ENCODE measurements at regions of chr15 and their contacts with region 1.

Region 1: GRCh38 chr15:31391687-31392671 is 65.3 kb downstream of the KLF13 start:
- DNase-seq: no peak
- ATAC-seq: peak; percentile 75
- H3K4me3 ChIP-seq: peak overlapping the region; percentile 45 to 77 (median 63)
- H3K27ac ChIP-seq: no peak overlapping the region
- H3K4me1 ChIP-seq: peaks cover 32% of the 10 kb centered on the region
- H3K27me3 ChIP-seq: peaks cover 2 to 18% of the 10 kb centered on the region in 2 experiments; a peak in 2 of 5 replicates
- CTCF ChIP-seq: peak; percentile 18; the same call in 1 of the 2 replicates
- EP300 ChIP-seq: no peak
- POLR2A ChIP-seq: no peak
- RAD21 ChIP-seq: no peak

Region 2: DNA sequence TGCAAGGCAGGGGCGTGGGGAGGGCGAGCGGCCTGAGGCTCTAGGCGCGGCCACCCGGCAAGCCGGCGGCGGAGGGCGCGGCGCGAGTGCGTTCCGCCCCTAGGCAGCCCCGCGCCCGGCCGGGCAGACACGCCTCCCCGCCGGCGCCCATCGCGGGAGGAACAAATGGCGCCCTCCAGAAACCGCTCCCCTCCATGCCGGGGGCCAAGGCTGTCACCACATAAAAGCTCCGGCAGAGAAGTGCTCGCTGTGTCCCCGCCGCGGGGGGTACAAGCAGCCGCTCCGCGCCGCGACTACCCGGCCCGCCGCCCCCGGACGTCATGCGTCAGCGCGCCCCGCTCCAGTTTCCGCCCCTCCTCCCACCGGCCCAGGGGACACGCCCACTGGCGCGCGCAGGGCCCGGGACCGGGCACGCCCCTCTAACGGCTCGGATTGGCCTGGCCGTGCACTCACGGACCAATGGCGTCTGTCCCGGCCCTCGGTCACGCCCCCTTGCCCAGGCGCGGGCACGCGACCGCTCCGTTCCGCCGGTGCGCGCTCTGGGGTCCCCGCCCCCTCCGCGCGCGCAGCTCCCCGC is 65.7 kb before region 1 on chr15:
- CTCF ChIA-PET with region 1: no interaction called
- POLR2A ChIA-PET with region 1: no interaction called
- in situ Hi-C with region 1: no loop called
- intact Hi-C with region 1: loop called (anchors 10 kb)
- DNase-seq: peak; percentile 89
- ATAC-seq: peak; percentile 83
- H3K4me3 ChIP-seq: peak overlapping the region; percentile 79 to 90 (median 89)
- H3K27ac ChIP-seq: peak overlapping the region; percentile 82
- H3K4me1 ChIP-seq: peaks cover 47% of the 10 kb centered on the region
- H3K27me3 ChIP-seq: peaks cover 0 to 3% of the 10 kb centered on the region in 2 experiments; a peak in 1 of 5 replicates
- CTCF ChIP-seq: no peak; the same call in 1 of the 2 replicates
- EP300 ChIP-seq: no peak
- POLR2A ChIP-seq: 0 out of 4 replicates have a peak, but pooled peaks of 1 of the 2 experiments have one; percentile 35
- RAD21 ChIP-seq: peak; percentile 41; the same call in 1 of the 2 replicates

Measured in HepG2 (cell line).